Calu3 (cell line): ENCODE measurements at regions of chr9 and their contacts with region 1.

Region 1: DNA sequence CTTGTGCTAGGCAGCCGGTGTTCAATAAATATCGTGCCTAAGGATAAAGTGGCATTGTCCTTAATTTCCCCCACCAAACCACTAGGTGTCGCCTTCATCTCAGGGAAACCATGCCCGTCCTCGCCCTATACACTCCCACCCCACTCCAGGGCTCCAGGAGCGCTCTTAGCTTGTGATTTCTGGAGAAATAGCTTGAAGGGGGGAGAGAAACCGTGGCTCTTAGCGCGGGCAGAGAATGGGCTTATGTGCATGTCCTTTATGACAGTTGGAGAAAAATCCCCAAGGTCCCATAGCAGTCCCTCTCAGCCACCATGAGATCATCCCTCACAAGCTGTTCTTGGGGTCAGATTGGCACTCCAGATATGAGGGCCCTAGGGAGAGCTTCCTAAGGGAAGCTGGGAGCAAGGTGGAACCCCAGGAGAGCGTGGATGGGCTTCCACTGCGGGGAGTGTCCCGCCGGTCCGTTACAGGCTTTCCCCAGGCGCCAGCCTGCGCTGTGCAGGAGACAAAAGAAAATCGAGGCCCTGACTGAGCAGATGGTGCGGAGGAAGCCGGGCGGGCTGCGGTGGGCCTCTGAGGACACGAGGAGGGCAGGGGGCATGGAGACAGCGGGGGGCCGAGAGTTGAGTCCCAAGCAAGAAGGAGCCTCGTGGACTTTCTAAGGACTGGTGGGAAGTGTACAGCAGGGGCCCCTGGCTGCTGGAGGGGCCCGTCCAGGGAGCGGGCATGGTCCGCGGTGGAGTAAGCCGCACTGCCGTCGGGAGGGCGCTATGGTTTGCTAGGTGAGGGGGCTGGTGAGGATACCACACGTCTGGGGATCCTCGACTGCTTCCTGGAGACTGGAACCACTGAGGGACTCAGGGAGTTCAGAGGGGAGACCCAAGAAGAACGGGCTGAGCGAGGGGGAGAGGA is 750 bp upstream of the NPR2 start:
- DNase-seq: peak; percentile 48
- H3K4me3 Mint-ChIP-seq: no peak overlapping the region
- H3K27ac Mint-ChIP-seq: no peak overlapping the region
- H3K4me1 Mint-ChIP-seq: peaks cover 14% of the 10 kb centered on the region
- H3K27me3 Mint-ChIP-seq: no peaks in the 10 kb centered on the region
- CTCF ChIP-seq: no peak

Region 2: GRCh38 chr9:35406183-35406956 is 384.3 kb before region 1 on chr9:
- CTCF ChIA-PET with region 1: no interaction called
- intact Hi-C with region 1: no loop called
- DNase-seq: no peak
- H3K4me3 Mint-ChIP-seq: no peak overlapping the region
- H3K27ac Mint-ChIP-seq: no peak overlapping the region
- H3K4me1 Mint-ChIP-seq: no peaks in the 10 kb centered on the region
- H3K27me3 Mint-ChIP-seq: no peaks in the 10 kb centered on the region
- CTCF ChIP-seq: no peak

Region 3: GRCh38 chr9:35882263-35882848 is 91.7 kb after region 1 on chr9:
- CTCF ChIA-PET with region 1: interaction called, 16 read pairs
- intact Hi-C with region 1: loop called (anchors 1 kb)
- DNase-seq: peak; percentile 83
- H3K4me3 Mint-ChIP-seq: no peak overlapping the region
- H3K27ac Mint-ChIP-seq: no peak overlapping the region
- H3K4me1 Mint-ChIP-seq: no peaks in the 10 kb centered on the region
- H3K27me3 Mint-ChIP-seq: peaks cover 10% of the 10 kb centered on the region
- CTCF ChIP-seq: peak; percentile 71